ENCODE measurements at regions of chr14 and their contacts with region 1.

Region 1: DNA sequence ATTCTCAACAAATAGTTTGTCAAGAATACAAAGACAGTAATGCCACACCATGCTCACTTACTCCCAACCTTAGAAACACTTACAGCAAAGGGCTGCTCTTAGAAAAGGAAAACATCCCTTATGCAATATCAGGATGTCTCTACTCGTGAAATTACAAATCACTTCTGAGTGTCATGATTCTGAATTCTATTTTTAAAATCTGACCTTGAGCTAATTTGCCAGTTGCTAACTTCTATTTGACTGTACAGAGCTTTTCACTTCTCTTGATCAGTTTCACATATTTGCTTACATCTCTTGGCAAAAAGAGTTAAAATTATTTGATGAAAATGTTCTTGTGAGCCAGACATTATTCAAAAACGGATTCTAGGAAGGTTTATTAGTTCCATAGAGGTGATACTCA is 136.7 kb upstream of the SLC35F4 start:
- DNase-seq: no peak
- H3K4me3 ChIP-seq: no peak overlapping the region
- H3K27ac ChIP-seq: no peak overlapping the region
- H3K4me1 ChIP-seq: no peaks in the 10 kb centered on the region
- H3K27me3 ChIP-seq: no peaks in the 10 kb centered on the region
- CTCF ChIP-seq: no peak
- POLR2A ChIP-seq: no peak

Region 2: DNA sequence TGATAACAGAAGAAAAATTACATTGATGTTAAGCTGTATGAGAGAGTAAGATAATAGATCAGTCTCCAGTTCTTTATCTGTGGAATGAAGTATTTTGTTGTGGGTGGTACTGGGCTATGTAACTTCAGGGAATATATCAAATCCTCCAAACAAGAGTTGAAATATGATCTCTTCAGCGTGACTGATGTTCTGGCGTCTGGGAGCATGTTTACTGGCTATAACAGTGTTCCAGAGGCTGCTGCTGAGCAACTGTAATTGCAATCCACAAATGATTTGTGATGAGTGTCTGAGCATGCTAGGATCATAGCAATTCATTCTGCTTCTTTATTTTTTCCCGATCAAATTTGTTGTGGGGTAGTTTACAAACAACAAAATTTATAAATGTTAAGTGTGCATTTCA is 490.4 kb before region 1 on chr14:
- intact Hi-C with region 1: loop called (anchors 10 kb)
- DNase-seq: no peak
- H3K4me3 ChIP-seq: no peak overlapping the region
- H3K27ac ChIP-seq: no peak overlapping the region
- H3K4me1 ChIP-seq: no peaks in the 10 kb centered on the region
- H3K27me3 ChIP-seq: no peaks in the 10 kb centered on the region
- CTCF ChIP-seq: no peak
- POLR2A ChIP-seq: no peak

Region 3: DNA sequence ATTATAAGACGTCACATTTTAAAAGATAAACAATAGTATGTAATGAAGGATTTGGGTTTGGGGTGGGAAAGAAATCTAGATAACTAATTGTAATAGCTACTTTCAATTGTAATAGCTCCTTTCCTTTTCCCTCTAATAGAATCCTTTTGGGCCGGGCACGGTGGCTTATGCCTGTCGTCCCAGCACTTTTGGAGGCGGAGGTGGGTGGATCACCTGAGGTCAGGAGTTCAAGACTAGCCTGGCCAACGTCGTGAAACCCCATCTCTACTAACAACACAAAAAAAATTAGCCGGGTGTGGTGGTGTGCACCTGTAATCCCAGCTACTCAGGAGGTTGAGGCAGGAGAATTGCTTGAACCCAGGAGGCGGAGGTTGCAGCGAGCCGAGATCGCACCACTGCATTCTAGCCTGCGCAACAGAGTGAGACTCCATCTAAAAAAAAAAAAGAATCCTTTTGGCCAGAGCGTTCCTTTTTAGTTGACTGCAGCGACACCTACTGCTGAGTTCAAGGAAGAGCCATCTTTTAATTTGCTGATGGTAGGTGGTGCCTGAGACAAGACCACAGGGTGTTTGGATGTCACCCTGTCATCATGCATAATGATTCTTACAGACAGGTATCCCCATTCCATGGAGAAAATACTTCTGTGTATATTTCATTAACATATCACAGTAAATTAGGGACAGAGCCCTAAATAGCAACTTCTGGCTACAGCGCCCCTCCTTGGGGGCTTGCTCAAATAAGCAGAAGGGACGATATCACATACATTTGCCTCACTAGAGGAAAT is 69.9 kb after region 1 on chr14:
- intact Hi-C with region 1: no loop called
- DNase-seq: no peak
- H3K4me3 ChIP-seq: peak overlapping the region in 2 of 3 donors; percentile 36 to 52
- H3K27ac ChIP-seq: no peak overlapping the region
- H3K4me1 ChIP-seq: no peaks in the 10 kb centered on the region
- H3K27me3 ChIP-seq: no peaks in the 10 kb centered on the region
- CTCF ChIP-seq: peak in 2 of 3 donors; percentile 45 to 59
- POLR2A ChIP-seq: no peak

Measured in breast epithelium (tissue), 4 donors.